SK-N-SH (cell line): ENCODE measurements at regions of chr13 and their contacts with region 1.

Region 1: GRCh38 chr13:72565893-72566292 is 161.5 kb downstream of the MZT1 start:
- DNase-seq: peak; percentile 11
- H3K4me3 ChIP-seq: no peak overlapping the region; a peak in 1 of 4 replicates
- H3K27ac ChIP-seq: no peak overlapping the region
- H3K4me1 ChIP-seq: peaks cover 0 to 15% of the 10 kb centered on the region in 2 experiments; a peak in 2 of 4 replicates
- H3K27me3 ChIP-seq: no peaks in the 10 kb centered on the region
- CTCF ChIP-seq: peak; percentile 95
- EP300 ChIP-seq: no peak
- RAD21 ChIP-seq: peak; percentile 85

Region 2: DNA sequence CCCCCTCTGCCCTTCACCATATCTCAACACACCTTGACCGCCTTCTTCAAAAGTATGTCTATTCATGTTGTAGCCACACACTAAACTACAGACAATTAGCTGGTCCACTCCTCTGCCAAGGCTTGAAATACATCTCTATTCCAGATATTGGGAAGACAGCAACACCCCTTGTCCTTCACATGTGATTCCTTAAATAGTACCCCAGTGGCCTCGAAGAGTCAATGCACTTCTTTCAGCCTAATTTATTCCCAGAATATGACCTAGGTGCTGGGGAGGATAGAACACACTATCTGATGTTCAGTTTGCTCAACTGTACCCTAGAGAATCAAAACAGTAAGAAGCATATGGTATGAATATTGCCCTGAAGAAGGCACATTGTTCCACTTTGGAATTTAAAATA is 616.5 kb before region 1 on chr13:
- CTCF ChIA-PET with region 1: no interaction called
- POLR2A ChIA-PET with region 1: no interaction called
- DNase-seq: no peak
- H3K4me3 ChIP-seq: no peak overlapping the region
- H3K27ac ChIP-seq: no peak overlapping the region
- H3K4me1 ChIP-seq: no peaks in the 10 kb centered on the region
- H3K27me3 ChIP-seq: no peaks in the 10 kb centered on the region
- CTCF ChIP-seq: no peak
- EP300 ChIP-seq: no peak
- RAD21 ChIP-seq: no peak

Region 3: DNA sequence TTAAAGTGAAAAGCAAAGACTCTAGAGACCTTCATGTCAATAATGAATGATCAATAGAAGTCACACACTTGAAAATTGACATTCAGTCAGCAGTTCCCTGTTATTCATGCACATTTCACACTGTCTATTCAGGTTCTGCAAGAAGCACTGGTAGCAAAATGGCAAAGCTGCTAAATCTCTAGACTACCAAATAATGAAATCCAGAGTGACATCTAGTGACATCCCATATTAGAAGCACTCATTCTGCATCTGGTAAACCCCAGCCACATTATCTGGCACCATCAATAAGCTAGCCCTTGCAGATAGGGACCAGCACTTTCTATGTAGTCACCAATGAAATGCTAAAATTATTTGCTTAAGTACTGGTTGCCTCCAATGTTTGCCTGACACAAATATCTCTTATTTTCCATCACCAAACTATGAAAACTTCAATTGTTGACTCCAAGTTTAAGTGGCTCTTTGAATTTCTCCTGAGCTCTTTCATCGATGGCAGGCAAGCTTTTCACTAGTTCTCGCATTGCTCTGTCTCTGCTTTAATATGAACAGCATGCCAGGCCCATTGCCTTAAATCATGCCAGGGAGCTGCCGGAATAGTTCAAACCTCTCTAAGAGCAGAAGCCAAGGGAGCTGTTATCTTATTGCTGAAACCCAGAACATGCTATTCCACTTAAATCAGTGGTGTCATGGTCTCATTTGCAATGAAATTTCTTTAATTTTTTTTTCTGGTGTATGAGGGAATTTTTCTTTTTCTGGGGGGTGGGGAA is 248.4 kb before region 1 on chr13:
- CTCF ChIA-PET with region 1: no interaction called
- POLR2A ChIA-PET with region 1: no interaction called
- DNase-seq: peak; percentile 11
- H3K4me3 ChIP-seq: no peak overlapping the region
- H3K27ac ChIP-seq: no peak overlapping the region
- H3K4me1 ChIP-seq: no peaks in the 10 kb centered on the region; a peak in 2 of 4 replicates
- H3K27me3 ChIP-seq: no peaks in the 10 kb centered on the region
- CTCF ChIP-seq: no peak
- EP300 ChIP-seq: no peak
- RAD21 ChIP-seq: peak; percentile 49

Region 4: DNA sequence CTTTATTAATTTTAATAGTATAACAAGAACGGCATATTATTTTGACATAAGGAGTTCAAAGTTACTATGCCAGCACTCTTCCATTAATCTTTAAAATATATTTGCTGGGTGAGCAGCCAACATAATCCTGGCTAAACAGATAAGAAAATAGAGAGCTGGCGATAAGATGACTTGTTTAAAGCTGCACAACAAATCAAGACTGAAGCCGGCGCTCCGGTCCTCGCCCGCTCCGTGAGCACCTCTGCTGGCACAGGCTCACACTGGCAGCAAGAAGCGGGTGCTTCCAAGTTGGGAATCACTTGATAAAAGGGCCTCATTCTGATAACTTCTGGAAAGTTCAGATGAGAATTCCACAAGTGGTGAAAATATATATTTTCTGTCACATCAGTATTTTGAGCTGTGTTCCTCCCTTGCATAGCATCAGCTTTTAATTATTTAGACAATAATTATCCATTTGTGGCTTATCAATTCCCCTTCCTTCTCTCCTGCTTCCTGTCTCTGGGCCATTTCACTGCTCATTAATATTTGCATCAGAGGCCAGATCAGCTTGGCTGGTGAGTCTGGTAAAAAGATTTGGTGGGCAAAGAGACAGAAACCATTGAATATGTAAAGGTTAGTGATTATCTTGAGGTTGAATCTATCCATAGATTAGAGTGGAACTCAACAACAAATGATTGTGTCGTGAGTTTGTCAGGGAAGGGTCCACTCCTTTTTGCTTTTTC is 43.8 kb before region 1 on chr13:
- CTCF ChIA-PET with region 1: interaction called, 14 read pairs
- POLR2A ChIA-PET with region 1: no interaction called
- DNase-seq: peak; percentile 46
- H3K4me3 ChIP-seq: peak overlapping the region in 1 of 2 experiments; percentile 19; a peak in 2 of 4 replicates
- H3K27ac ChIP-seq: peak overlapping the region in 1 of 2 experiments; percentile 89; a peak in 2 of 4 replicates
- H3K4me1 ChIP-seq: peaks cover 0 to 19% of the 10 kb centered on the region in 2 experiments; a peak in 2 of 4 replicates
- H3K27me3 ChIP-seq: no peaks in the 10 kb centered on the region
- CTCF ChIP-seq: no peak; the same call in 1 of the 2 replicates
- EP300 ChIP-seq: peak in 1 of 2 experiments; percentile 96; a peak in 2 of 4 replicates
- RAD21 ChIP-seq: peak; percentile 47